Left cardiac atrium (tissue), 4 donors: ENCODE measurements at regions of chr17 and their contacts with region 1.

Region 1: DNA sequence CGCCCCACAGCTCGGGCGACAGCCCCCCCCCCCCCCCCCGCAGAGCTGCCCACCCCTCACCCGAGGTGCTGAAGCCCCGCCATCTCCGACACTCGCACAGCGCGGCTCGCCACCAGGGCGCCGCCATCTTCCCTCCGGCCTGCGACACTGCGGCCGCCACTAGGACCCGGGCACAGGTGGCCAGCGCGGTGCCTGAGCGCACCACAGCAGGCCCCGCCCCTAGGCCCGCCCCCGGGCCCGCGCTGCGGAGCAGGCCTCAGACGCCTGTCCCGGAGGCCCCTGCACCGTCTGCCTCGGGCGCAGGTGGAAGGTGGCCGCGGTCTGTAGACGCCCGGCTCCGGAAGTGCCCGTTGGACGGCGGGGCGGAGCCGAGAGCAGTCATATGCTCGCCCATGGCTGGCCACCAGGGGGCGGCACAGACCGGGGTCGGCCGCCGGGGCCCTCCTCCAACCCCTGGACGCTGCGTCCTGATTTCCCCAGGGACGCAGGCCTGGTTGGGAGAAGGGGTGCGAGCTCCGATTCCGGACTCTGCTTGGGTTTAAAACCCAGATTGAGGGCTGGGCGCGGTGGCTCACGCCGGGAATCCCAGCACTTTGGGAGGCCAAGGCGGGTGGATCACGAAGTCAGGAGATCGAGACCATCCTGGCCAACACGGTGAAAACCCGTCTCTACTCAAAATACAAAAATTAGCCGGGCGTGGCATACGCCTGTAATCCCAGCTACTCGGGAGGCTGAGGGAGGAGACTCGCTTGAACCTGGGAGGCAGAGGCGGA is at the start of gene MRPL38:
- DNase-seq: peak; percentile 93
- ATAC-seq: peak; percentile 92 to 95
- total RNA-seq, gene MRPL38: 73.7 to 83.4 TPM

Region 2: GRCh38 chr17:76005263-76006149 is 100.6 kb after region 1 on chr17:
- intact Hi-C with region 1: loop called (anchors 2 to 5 kb)
- DNase-seq: peak; percentile 82
- ATAC-seq: peak; percentile 66 to 74